CD8-positive, alpha-beta T cell (primary cell): ENCODE measurements at regions of chr2 and their contacts with region 1.

Region 1: GRCh38 chr2:109128048-109128465 is 948 bp upstream of the SH3RF3 start:
- DNase-seq: peak; percentile 38 to 83 (median 63)
- ATAC-seq: peak; percentile 54
- H3K4me3 ChIP-seq: peak overlapping the region; percentile 57 to 89
- H3K4me3 Mint-ChIP-seq: peak overlapping the region; percentile 84
- H3K27ac ChIP-seq: peak overlapping the region in 1 of 2 experiments; percentile 47
- H3K27ac Mint-ChIP-seq: peak overlapping the region; percentile 66
- H3K4me1 ChIP-seq: peaks cover 19% of the 10 kb centered on the region
- H3K4me1 Mint-ChIP-seq: peaks cover 48% of the 10 kb centered on the region
- H3K27me3 ChIP-seq: peaks cover 0 to 16% of the 10 kb centered on the region in 2 experiments
- H3K27me3 Mint-ChIP-seq: peaks cover 9% of the 10 kb centered on the region
- CTCF ChIP-seq: peak; percentile 86

Region 2: DNA sequence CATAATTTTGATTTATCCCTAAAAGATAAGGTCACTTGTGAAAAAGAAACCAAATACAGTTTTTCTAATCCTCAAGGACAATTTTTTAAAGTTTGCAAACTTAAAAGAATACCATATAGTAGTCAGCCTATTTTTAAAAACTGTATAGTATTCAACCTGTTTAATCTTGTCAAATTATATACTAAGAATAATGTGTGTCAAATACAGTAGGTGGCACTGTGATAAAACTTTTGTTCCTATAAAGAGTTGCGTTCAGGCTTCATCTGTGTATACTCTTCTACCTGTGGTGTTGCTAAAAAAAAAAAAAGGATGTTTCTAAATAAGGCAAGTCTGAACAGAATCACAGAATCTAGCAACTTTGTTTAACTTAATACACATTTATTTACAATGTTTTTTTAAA is 272.9 kb before region 1 on chr2:
- CTCF ChIA-PET with region 1: interaction called, 5 read pairs
- POLR2A ChIA-PET with region 1: no interaction called
- intact Hi-C with region 1: loop called (anchors 5 kb)
- DNase-seq: peak in 2 of 9 experiments; percentile 32 to 57
- ATAC-seq: peak; percentile 61
- H3K4me3 ChIP-seq: no peak overlapping the region
- H3K4me3 Mint-ChIP-seq: no peak overlapping the region
- H3K27ac ChIP-seq: no peak overlapping the region
- H3K27ac Mint-ChIP-seq: no peak overlapping the region
- H3K4me1 ChIP-seq: no peaks in the 10 kb centered on the region
- H3K4me1 Mint-ChIP-seq: peaks cover 4% of the 10 kb centered on the region
- H3K27me3 ChIP-seq: no peaks in the 10 kb centered on the region
- H3K27me3 Mint-ChIP-seq: no peaks in the 10 kb centered on the region
- CTCF ChIP-seq: peak; percentile 61

Region 3: GRCh38 chr2:109020217-109020637 is 107.8 kb before region 1 on chr2:
- CTCF ChIA-PET with region 1: no interaction called
- POLR2A ChIA-PET with region 1: no interaction called
- intact Hi-C with region 1: no loop called
- DNase-seq: peak in 2 of 9 experiments; percentile 24 to 48
- ATAC-seq: peak; percentile 92
- H3K4me3 ChIP-seq: no peak overlapping the region
- H3K4me3 Mint-ChIP-seq: peak overlapping the region; percentile 9
- H3K27ac ChIP-seq: no peak overlapping the region
- H3K27ac Mint-ChIP-seq: peak overlapping the region; percentile 23
- H3K4me1 ChIP-seq: peaks cover 16% of the 10 kb centered on the region
- H3K4me1 Mint-ChIP-seq: peaks cover 36% of the 10 kb centered on the region
- H3K27me3 ChIP-seq: no peaks in the 10 kb centered on the region
- H3K27me3 Mint-ChIP-seq: no peaks in the 10 kb centered on the region
- CTCF ChIP-seq: no peak

Region 4: DNA sequence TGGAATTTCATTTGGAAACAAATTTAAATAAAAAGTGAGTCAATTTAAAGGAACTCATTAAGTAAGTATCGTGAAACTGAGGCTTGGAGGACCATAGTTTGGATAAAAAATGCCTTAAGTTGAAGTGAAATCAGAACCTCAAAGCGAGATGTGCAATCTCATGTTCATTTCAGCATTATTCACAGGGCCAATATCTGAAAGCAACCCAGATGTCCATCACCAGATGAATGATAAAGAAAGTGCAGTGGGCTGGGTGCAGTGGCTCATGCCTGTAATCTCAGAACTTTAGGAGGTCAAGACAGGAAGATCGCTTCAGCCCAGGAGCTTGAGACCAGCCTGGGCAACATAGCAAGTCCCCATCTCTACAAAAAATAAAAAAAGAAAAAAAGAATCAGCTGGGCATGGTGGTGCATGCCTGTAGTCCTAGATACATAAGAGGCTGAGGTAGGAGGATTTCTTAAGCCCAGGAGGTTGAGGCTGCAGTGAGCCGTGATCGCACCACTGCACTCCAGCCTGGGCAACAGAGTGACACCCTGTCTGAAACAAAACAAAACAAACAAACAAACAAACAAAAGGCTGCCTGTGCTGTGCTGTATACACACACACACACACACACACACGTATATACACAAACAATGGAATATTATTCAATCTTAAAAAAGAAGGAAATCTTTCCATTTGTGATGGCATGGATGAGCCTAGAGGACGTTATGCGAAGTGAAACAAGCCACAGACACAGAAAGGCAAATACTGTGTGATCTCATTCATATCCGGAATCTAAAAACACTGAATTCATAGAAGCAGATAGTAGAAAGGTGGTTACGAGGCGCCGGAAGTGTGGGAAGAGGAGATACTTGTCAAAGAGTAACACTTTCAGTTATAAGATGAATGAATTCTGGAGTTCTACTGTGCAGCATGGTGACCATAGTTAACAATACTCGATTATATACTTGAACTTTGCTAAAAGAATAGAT is 15.4 kb after region 1 on chr2:
- CTCF ChIA-PET with region 1: interaction called, 6 read pairs
- POLR2A ChIA-PET with region 1: interaction called, 3 read pairs
- intact Hi-C with region 1: loop called in 1 of 2 experiments (anchors 1 kb)
- DNase-seq: peak in 6 of 9 experiments; percentile 21 to 67 (median 48)
- ATAC-seq: peak; percentile 69
- H3K4me3 ChIP-seq: peak overlapping the region in 1 of 2 experiments; percentile 7
- H3K4me3 Mint-ChIP-seq: peak overlapping the region; percentile 26
- H3K27ac ChIP-seq: no peak overlapping the region
- H3K27ac Mint-ChIP-seq: peak overlapping the region; percentile 73
- H3K4me1 ChIP-seq: peaks cover 15% of the 10 kb centered on the region
- H3K4me1 Mint-ChIP-seq: peaks cover 46% of the 10 kb centered on the region
- H3K27me3 ChIP-seq: peaks cover 0 to 3% of the 10 kb centered on the region in 2 experiments
- H3K27me3 Mint-ChIP-seq: no peaks in the 10 kb centered on the region
- CTCF ChIP-seq: no peak

Region 5: GRCh38 chr2:109213646-109214417 is 85.8 kb after region 1 on chr2:
- CTCF ChIA-PET with region 1: no interaction called
- POLR2A ChIA-PET with region 1: interaction called, 4 read pairs
- intact Hi-C with region 1: loop called (anchors 5 kb)
- DNase-seq: peak; percentile 28 to 86 (median 66)
- ATAC-seq: peak; percentile 79
- H3K4me3 ChIP-seq: no peak overlapping the region
- H3K4me3 Mint-ChIP-seq: peak overlapping the region; percentile 46
- H3K27ac ChIP-seq: no peak overlapping the region
- H3K27ac Mint-ChIP-seq: peak overlapping the region; percentile 69
- H3K4me1 ChIP-seq: peaks cover 59% of the 10 kb centered on the region
- H3K4me1 Mint-ChIP-seq: peaks cover 74% of the 10 kb centered on the region
- H3K27me3 ChIP-seq: peaks cover 18 to 21% of the 10 kb centered on the region in 2 experiments
- H3K27me3 Mint-ChIP-seq: peaks cover 56% of the 10 kb centered on the region
- CTCF ChIP-seq: no peak

Region 6: GRCh38 chr2:109260886-109261700 is 133.0 kb after region 1 on chr2:
- CTCF ChIA-PET with region 1: no interaction called
- POLR2A ChIA-PET with region 1: no interaction called
- intact Hi-C with region 1: loop called in 1 of 2 experiments (anchors 5 kb)
- DNase-seq: peak in 1 of 9 experiments; percentile 11
- ATAC-seq: no peak
- H3K4me3 ChIP-seq: no peak overlapping the region
- H3K4me3 Mint-ChIP-seq: no peak overlapping the region
- H3K27ac ChIP-seq: no peak overlapping the region
- H3K27ac Mint-ChIP-seq: no peak overlapping the region
- H3K4me1 ChIP-seq: peaks cover 10% of the 10 kb centered on the region
- H3K4me1 Mint-ChIP-seq: peaks cover 27% of the 10 kb centered on the region
- H3K27me3 ChIP-seq: peaks cover 0 to 2% of the 10 kb centered on the region in 2 experiments
- H3K27me3 Mint-ChIP-seq: no peaks in the 10 kb centered on the region
- CTCF ChIP-seq: no peak

Region 7: DNA sequence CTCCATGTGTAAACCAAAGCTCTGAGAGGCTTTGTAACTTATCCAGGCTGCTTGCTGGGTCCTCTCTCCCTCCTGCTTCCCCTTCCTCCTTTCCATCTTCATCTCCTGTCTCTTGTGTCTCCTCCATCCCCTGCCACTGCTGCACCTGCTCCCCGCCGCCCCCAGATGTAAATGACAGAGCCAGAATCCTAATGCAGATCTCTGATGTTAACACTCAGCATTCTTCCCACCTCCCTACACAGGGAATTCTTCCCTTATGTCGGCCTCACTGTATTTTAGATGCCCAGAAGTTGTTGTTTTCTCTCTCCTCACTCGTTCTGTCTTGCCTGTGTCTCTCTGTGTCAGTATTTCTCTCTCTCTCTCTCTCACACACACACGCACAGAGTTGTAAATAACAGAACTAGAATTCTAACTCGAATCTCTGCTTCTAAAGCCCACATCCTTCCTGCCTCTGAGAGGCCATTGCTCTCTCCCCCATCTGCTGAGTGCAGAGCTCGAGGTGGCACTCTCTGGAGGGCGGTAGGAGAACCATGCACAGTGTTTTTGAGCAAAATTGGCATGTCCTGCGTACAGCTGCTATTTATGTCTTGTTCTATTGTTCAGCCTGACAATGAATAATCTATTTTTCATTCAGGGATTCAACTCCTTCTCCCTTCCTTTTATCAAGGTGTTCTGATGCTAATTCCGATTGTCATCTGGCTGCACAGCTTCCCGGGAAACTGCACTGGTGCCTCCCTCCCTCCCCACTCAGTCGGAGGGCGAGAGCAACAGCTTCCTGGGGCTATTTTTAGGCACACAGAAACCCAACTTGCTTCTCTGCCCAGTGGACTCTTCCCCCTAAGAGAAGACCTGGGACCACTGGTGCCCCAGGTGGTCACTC is 220.9 kb after region 1 on chr2:
- CTCF ChIA-PET with region 1: interaction called, 5 read pairs
- POLR2A ChIA-PET with region 1: interaction called, 8 read pairs
- intact Hi-C with region 1: loop called (anchors 2 to 5 kb)
- DNase-seq: peak; percentile 30 to 80 (median 59)
- ATAC-seq: peak; percentile 98
- H3K4me3 ChIP-seq: peak overlapping the region in 1 of 2 experiments; percentile 21
- H3K4me3 Mint-ChIP-seq: peak overlapping the region; percentile 71
- H3K27ac ChIP-seq: peak overlapping the region; percentile 49 to 74
- H3K27ac Mint-ChIP-seq: peak overlapping the region; percentile 95
- H3K4me1 ChIP-seq: peaks cover 48% of the 10 kb centered on the region
- H3K4me1 Mint-ChIP-seq: peaks cover 66% of the 10 kb centered on the region
- H3K27me3 ChIP-seq: no peaks in the 10 kb centered on the region
- H3K27me3 Mint-ChIP-seq: no peaks in the 10 kb centered on the region
- CTCF ChIP-seq: no peak

Region 8: GRCh38 chr2:109510136-109511028 is 382.3 kb after region 1 on chr2:
- CTCF ChIA-PET with region 1: interaction called, 79 read pairs
- POLR2A ChIA-PET with region 1: no interaction called
- intact Hi-C with region 1: loop called in 1 of 2 experiments (anchors 1 kb)
- DNase-seq: peak; percentile 58 to 87 (median 74)
- ATAC-seq: peak; percentile 92
- H3K4me3 ChIP-seq: no peak overlapping the region
- H3K4me3 Mint-ChIP-seq: no peak overlapping the region
- H3K27ac ChIP-seq: no peak overlapping the region
- H3K27ac Mint-ChIP-seq: no peak overlapping the region
- H3K4me1 ChIP-seq: no peaks in the 10 kb centered on the region
- H3K4me1 Mint-ChIP-seq: peaks cover 5% of the 10 kb centered on the region
- H3K27me3 ChIP-seq: no peaks in the 10 kb centered on the region
- H3K27me3 Mint-ChIP-seq: no peaks in the 10 kb centered on the region
- CTCF ChIP-seq: peak; percentile 79